Right ventricle myocardium inferior (tissue), 1 donor: ENCODE measurements at regions of chr14 and their contacts with region 1.

Region 1: GRCh38 chr14:71138448-71139293 is 231.4 kb downstream of the PCNX1 start:
- DNase-seq: peak; percentile 70
- ATAC-seq: peak; percentile 68

Region 2: DNA sequence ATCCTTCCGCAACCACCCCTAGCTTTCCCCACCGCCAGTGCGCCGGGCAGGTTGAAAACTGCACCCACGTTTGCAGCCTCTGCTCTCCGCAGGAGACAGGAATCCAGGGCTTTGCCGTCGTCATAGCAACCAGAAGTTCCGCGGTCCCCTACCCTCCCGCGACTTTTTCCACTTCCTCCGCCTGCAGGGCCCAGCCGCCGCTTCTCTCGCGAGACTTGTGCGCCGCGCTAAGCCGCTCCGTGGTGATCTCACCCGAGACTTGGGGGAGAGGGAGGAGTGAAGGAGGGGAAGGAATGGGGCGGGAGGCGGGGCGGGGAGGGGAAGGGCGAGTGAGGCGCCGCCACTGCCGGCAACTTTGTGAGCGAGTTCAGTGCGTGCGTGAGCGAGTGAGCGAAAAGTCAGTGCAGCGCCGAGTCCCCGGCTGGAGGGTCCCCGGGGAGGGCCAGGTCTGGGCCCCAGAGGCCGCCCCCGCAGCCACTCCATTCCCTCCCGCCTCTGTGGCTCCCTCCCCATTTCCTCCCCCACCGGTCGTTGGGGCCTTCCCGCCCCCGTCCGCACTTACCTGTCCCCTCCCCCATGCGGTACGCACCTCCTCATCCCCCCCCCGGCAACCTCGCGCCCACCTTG is 181.5 kb after region 1 on chr14:
- intact Hi-C with region 1: loop called (anchors 5 kb)
- DNase-seq: peak; percentile 99
- ATAC-seq: peak; percentile 99

Region 3: GRCh38 chr14:71753126-71753830 is 614.6 kb after region 1 on chr14:
- intact Hi-C with region 1: loop called (anchors 1 kb)
- DNase-seq: peak; percentile 94
- ATAC-seq: peak; percentile 70